Heart right ventricle (tissue), 16 donors: ENCODE measurements at regions of chr20 and their contacts with region 1.

Region 1: GRCh38 chr20:2840138-2840966 is at the starts of genes PCED1A and VPS16:
- DNase-seq: peak; percentile 87 to 91
- ATAC-seq: peak; percentile 98 to 99 (median 99)
- H3K4me3 ChIP-seq: peak within 1 kb of the TSS; percentile 73 to 97 (median 90)
- H3K27ac ChIP-seq: peak within 1 kb of the TSS; percentile 74 to 98 (median 93)
- H3K4me1 ChIP-seq: peaks cover 0 to 23% (median 18%) of the 10 kb centered on the region in 9 donors
- H3K27me3 ChIP-seq: no peaks in the 10 kb centered on the region
- CTCF ChIP-seq: no peak
- total RNA-seq, gene PCED1A: 4.5 to 11.9 (median 6.5) TPM
- total RNA-seq, gene VPS16: 13.0 to 22.8 (median 19.3) TPM

Region 2: DNA sequence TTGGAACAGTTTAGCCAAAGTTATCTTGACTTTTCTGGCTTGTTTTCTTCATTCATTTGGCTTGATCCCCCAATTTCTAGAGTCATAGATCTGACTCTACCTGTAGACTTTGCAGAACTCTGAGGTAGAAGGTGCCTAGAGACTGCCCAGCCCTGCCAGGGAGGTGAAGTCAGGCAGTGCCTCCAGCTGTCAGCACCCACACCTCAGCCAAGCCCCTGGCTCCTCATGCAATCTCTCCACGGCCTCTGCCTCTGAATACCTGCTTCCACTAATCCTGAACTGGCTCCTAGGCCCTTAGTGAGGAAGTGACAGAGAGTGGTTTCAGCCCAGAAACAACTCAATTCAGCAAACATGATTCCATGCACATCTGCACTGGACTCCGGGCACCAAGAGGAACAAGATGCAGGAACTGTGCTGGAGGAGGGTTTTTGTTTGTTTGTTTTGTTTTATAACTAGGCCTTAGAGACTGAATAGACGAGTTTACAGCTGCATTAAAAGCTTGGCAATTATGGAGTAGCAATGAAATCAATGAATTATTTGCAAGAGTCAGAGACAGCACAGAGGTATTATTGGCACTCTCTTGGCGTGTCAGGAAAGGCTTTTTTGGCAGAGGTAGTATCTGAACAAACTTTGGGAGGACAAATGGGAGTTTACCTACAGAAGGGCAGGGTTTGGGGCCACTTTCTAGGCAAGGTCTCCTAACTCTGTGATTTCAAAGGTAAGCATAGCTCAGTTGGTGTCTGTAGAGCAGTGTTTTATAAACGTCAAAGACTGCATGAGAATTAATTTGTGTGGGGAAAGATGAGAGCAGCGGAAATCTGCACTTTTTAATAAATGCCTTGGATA is 519.3 kb before region 1 on chr20:
- intact Hi-C with region 1: no loop called
- DNase-seq: no peak
- ATAC-seq: no peak
- H3K4me3 ChIP-seq: no peak overlapping the region
- H3K27ac ChIP-seq: no peak overlapping the region
- H3K4me1 ChIP-seq: no peaks in the 10 kb centered on the region
- H3K27me3 ChIP-seq: peaks cover 0 to 12% (median 6%) of the 10 kb centered on the region in 7 donors
- CTCF ChIP-seq: no peak

Region 3: DNA sequence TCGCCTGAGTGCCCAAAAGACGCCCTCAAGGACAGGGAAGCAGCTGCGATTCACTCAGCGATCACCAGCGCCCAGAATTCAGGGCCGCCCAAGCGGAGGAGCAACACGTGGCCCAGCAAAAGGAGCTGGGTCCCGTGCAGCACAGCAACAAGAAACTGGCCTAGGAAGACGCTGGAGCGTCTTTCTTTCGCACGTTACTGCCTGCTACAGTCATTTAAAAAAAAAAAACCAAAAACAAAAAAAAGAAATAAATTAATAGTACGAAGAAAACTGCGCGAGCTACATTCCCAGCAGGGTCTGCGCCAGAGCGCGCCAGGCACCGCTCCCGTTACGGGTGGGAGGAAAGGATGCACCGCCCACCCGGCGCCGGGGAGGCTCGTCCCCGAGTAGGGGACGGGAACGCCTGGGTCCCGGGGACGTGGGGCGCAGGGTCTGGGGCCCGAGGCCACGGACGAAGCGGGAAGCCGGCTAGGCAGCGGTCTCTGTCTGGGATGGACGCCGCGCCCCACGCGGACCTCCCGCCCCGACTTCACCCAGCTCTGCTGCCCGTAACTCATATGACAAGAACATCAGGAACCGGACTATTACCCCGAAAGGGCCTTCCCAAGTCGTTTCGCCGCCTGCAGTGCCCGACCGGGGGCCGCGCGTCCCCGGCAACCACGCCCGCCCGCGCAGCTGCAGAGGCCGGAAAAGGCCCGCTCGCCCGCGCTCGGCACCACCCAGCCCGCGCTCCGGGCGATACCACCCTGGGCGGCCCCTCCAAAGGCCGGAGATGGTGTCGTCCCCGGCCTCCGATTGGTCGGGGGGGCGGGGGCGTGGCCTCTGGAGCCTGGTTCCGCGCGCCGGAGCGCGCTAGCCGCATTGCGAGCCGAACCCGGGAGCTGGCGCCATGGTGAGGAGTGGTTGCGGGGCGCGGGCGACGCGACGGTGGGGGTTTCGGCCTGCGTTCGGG is 188.3 kb before region 1 on chr20 and contains the start of gene NOP56:
- intact Hi-C with region 1: loop called in 1 of 10 experiments (anchors 5 kb)
- DNase-seq: peak; percentile 91 to 95
- ATAC-seq: peak; percentile 96 to 99 (median 98)
- H3K4me3 ChIP-seq: peak within 1 kb of the TSS; percentile 69 to 98 (median 93)
- H3K27ac ChIP-seq: peak within 1 kb of the TSS; percentile 67 to 97 (median 94)
- H3K4me1 ChIP-seq: peaks cover 3 to 33% (median 25%) of the 10 kb centered on the region in 9 donors
- H3K27me3 ChIP-seq: no peaks in the 10 kb centered on the region
- CTCF ChIP-seq: peak in 1 of 9 donors; percentile 4
- total RNA-seq, gene NOP56: 37.1 to 77.1 (median 46.7) TPM

Region 4: GRCh38 chr20:2663887-2664719 is 176.2 kb before region 1 on chr20 and contains the start of gene IDH3B:
- intact Hi-C with region 1: loop called in 1 of 10 experiments (anchors 10 kb)
- DNase-seq: peak; percentile 91 to 95
- ATAC-seq: peak; percentile 97 to 99 (median 99)
- H3K4me3 ChIP-seq: peak within 1 kb of the TSS; percentile 71 to 94 (median 82)
- H3K27ac ChIP-seq: peak within 1 kb of the TSS; percentile 55 to 98 (median 90)
- H3K4me1 ChIP-seq: peaks cover 0 to 23% (median 14%) of the 10 kb centered on the region in 9 donors
- H3K27me3 ChIP-seq: no peaks in the 10 kb centered on the region
- CTCF ChIP-seq: no peak
- total RNA-seq, gene IDH3B: 135 to 264 (median 224) TPM

Region 5: DNA sequence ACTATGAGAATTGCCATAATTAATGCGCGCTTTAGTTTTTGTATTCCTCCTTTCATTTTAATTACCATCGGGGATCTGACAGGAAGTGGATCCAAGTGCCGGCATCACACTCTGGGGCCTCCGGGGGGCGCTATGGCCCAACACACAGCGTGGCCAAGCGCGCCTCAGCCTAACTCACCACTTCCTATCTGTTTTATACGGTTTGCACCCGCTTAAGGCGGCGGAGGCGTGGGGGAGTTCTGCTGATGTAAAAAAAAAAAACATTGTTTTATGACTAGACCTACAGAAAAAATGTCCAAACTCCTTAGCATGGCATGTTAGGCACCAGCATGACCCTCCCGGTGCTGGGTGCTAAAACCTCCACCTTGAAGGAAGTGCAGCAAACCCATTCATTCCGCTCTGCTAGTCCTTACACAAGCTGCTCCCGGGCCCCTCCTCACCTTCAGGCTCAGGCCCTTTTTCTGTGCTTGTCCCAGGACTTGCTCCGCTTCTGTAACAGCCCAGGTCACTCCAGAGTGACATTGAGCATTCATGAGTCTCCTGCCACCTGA is 152.2 kb before region 1 on chr20:
- intact Hi-C with region 1: loop called in 2 of 10 experiments (anchors 2 to 10 kb)
- DNase-seq: peak; percentile 29 to 52
- ATAC-seq: peak in 3 of 8 donors; percentile 40 to 56 (median 46)
- H3K4me3 ChIP-seq: no peak overlapping the region
- H3K27ac ChIP-seq: no peak overlapping the region
- H3K4me1 ChIP-seq: peaks cover 0 to 18% (median 6%) of the 10 kb centered on the region in 9 donors
- H3K27me3 ChIP-seq: peaks cover 0 to 57% (median 10%) of the 10 kb centered on the region in 7 donors
- CTCF ChIP-seq: peak; percentile 25 to 74 (median 62)

Region 6: DNA sequence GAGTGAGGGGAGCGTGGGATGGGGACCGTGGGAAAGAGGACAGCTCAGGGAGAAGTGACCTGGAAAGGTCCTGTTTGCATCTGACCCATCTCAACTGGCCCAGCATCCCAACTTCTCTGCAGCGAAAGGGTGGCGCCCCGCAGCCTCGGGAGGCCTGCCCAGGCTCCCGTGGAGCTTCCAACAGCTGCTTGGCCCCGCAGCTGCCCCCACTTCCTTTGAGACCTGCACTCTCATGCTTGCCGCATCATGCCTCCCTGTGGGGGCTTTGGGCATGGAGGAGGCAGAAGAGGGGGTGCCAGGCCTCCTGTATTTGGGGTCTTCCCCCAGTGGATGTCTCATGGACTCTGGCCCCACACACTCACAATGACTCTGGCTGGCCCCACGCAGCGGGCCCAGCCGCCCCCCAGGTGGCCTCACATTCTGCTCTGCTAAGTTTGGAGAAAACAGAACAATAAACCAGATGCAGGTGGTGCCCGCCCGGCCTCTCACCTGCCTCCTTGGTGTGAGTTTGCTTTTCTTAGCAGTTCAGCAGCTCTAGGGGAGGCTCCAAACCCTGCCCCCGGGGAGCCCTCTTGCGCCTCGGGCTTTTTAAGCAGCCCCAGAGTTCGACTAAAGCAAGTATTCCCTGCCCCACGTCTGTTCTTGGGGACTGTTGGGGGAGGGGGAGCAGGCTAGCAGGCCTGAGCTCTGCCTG is 80.6 kb before region 1 on chr20:
- intact Hi-C with region 1: loop called in 3 of 10 experiments (anchors 5 to 10 kb)
- DNase-seq: no peak
- ATAC-seq: no peak
- H3K4me3 ChIP-seq: no peak overlapping the region
- H3K27ac ChIP-seq: no peak overlapping the region
- H3K4me1 ChIP-seq: no peaks in the 10 kb centered on the region
- H3K27me3 ChIP-seq: peaks cover 0 to 84% (median 52%) of the 10 kb centered on the region in 7 donors
- CTCF ChIP-seq: no peak